ENCODE measurements at regions of chr15 and their contacts with region 1.

Region 1: DNA sequence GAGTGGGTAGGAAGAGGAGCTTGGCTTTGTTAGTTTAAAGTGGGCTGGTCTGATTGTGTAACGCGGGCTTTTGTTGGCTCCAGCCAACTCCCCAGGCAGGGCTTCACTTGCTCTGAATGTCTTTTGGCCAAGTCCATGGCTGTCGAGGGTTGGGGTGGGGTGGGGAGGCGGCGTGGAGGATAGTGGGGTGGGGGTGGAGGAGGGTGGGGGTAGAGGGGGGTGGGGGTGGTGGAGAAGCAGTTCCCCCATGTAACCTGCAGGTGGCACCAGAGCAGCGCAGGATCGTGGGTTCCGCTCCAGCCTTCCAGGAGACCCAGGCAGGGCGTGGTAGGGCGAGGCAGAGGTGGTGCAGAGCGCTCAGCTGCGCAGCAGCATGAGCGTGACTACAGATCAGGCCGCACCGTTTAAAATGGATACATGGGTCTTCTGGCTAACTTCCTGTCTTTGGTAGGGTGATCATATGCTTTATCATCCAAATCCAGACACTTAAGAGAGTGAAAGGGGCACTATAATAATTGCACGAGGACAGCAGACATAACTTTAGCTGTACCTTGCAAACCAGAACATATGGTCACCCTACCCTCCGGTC is 28.3 kb downstream of the GOLGA6A start:
- DNase-seq: peak; percentile 88
- ATAC-seq: peak; percentile 99
- H3K4me3 Mint-ChIP-seq: no peak overlapping the region
- H3K27ac Mint-ChIP-seq: no peak overlapping the region
- H3K4me1 Mint-ChIP-seq: peaks cover 8% of the 10 kb centered on the region
- H3K27me3 Mint-ChIP-seq: no peaks in the 10 kb centered on the region

Region 2: GRCh38 chr15:74036271-74037170 is 17.5 kb before region 1 on chr15:
- CTCF ChIA-PET with region 1: interaction called, 21 read pairs
- POLR2A ChIA-PET with region 1: no interaction called
- intact Hi-C with region 1: no loop called
- DNase-seq: peak; percentile 30
- ATAC-seq: no peak
- H3K4me3 Mint-ChIP-seq: no peak overlapping the region
- H3K27ac Mint-ChIP-seq: no peak overlapping the region
- H3K4me1 Mint-ChIP-seq: no peaks in the 10 kb centered on the region
- H3K27me3 Mint-ChIP-seq: no peaks in the 10 kb centered on the region

Region 3: GRCh38 chr15:74127260-74127953 is 73.4 kb after region 1 on chr15:
- CTCF ChIA-PET with region 1: interaction called, 4 read pairs
- POLR2A ChIA-PET with region 1: no interaction called
- intact Hi-C with region 1: loop called in 1 of 2 experiments (anchors 1 kb)
- DNase-seq: peak; percentile 94
- ATAC-seq: peak; percentile 96
- H3K4me3 Mint-ChIP-seq: peak overlapping the region; percentile 21
- H3K27ac Mint-ChIP-seq: no peak overlapping the region
- H3K4me1 Mint-ChIP-seq: peaks cover 19% of the 10 kb centered on the region
- H3K27me3 Mint-ChIP-seq: peaks cover 60% of the 10 kb centered on the region

Region 4: DNA sequence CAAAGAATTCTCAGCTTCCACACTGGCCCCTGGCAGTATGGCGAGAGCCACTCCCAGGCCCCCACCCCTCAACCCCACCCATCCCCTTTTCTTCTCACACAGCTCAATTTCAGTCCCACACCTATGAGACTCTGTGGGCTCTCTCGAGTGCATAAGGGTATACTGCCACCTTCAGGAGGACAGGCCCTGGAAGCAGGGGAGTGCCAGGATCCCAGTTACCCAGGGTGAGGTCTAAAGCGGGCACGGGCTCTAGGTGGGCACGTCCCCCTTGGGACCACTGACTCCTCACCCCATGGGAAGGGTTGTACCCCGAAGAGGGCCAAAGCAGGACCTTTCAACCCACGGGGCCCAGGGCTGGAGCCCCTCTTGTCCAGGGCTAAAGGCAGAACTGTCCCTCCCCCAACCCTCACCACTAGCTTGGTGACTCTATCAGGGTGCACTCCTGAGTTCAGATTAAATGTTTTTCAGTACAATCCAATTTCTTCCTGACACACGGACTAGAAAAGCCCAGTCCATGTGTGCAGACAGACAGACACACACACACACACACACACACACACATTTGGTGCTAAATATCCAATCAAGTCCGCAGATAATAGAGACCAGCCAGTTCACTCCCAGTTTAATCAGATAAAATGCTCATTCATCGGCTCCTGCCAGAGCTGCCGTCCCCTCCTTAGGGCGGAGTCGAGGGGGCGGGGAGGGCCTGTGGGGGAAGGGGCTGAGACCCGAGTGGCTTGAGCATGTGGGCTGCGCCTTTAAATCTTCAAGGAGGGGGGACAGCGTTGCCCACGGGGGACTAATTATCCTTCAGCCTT is 254.0 kb after region 1 on chr15:
- CTCF ChIA-PET with region 1: interaction called, 3 read pairs
- POLR2A ChIA-PET with region 1: no interaction called
- intact Hi-C with region 1: loop called in 1 of 2 experiments (anchors 10 kb)
- DNase-seq: peak; percentile 62
- ATAC-seq: peak; percentile 81
- H3K4me3 Mint-ChIP-seq: no peak overlapping the region
- H3K27ac Mint-ChIP-seq: no peak overlapping the region
- H3K4me1 Mint-ChIP-seq: no peaks in the 10 kb centered on the region
- H3K27me3 Mint-ChIP-seq: peaks cover 12% of the 10 kb centered on the region

Region 5: DNA sequence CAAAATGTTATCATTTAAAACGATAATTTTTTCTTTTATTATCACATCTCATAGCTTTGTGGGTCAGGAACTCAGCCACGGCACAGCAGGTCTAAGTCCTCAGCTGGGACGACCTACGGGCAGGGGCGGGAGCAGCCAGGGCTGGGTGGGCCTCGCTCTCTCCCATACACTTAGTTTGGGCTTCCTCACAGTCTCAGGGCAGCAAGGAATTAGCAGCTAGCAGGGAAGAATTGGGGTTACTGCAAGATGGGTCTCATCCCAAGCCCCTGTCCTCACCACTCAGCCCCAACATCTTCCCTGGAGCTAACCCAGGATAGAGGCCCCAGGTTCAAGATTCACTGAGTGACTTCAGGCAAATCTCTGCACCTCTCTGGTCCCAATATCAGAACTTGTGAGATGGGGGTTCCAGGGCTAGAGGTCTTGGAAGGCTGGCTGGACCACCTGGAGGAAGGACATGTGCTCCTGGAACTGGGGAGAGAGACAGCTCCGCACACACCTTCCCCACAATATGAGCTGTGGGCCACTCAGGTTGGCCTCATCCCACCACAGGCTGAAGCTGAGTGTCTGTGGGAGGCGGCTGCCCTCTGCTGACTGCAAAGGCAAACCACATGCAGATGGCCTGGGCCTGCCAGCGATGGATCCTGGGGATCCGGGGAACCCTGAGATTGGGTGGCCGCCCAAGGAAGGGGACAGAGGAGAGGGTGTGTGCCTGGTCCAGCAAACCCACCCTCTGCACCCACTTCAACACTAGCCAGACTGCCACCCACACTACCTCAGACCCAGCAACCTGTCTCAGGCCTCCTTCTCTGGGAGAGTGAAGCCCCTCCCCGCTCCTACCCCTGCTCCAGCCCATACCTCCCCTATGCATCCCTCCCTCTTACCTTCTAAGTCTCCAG is 268.4 kb after region 1 on chr15:
- CTCF ChIA-PET with region 1: interaction called, 12 read pairs
- POLR2A ChIA-PET with region 1: no interaction called
- intact Hi-C with region 1: no loop called
- DNase-seq: peak; percentile 80
- ATAC-seq: peak; percentile 87
- H3K4me3 Mint-ChIP-seq: no peak overlapping the region
- H3K27ac Mint-ChIP-seq: no peak overlapping the region
- H3K4me1 Mint-ChIP-seq: peaks cover 2% of the 10 kb centered on the region
- H3K27me3 Mint-ChIP-seq: no peaks in the 10 kb centered on the region

Measured in activated CD4-positive, alpha-beta T cell treated with anti-CD3 and anti-CD28 coated beads for 36 hours (primary cell).